Sigmoid colon (tissue), 7 donors: ENCODE measurements at regions of chr1 and their contacts with region 1.

Region 1: DNA sequence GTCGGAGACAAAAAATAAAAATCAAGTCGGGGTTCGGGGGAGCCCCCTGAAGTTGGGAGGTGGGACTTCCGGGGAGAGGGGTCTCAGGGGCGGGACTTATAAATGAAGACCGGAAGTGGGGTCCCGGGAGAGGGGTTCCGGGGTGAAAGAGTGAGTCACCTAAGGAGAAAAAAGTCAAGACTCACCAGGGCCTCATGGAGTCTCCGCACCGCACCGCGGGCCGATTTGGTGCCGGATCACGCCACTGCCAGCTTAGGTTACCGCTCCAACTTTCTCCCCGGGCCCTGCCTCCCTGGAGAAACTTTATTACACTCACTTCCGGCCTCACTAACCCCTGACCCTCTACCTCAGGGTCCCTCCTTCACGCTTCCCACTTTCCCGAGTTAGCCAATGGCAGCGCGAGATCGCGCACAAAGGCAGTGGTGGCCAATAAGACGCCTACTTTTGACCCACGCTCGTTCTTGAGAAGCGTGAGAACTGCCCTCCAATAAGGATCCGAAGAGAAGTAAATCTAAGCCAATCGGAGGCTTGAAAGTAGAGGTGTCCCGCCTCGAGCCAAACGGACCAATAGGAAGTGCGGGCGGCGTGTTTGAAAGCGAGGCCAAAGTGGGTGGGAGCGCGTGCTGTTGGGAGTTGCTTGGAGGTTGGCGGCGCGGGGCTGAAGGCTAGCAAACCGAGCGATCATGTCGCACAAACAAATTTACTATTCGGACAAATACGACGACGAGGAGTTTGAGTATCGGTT is at the start of gene CKS1B:
- DNase-seq: peak; percentile 99
- H3K4me3 ChIP-seq: peak within 1 kb of the TSS; percentile 60 to 77 (median 70)
- H3K27ac ChIP-seq: peak within 1 kb of the TSS; percentile 95 to 98 (median 96)
- H3K4me1 ChIP-seq: peaks cover 0 to 51% (median 46%) of the 10 kb centered on the region in 4 donors
- H3K27me3 ChIP-seq: no peaks in the 10 kb centered on the region
- CTCF ChIP-seq: no peak
- EP300 ChIP-seq: no peak
- POLR2A ChIP-seq: peak; percentile 57 to 59
- total RNA-seq, gene CKS1B: 10.2 to 35.7 (median 25.7) TPM

Region 2: GRCh38 chr1:154936555-154937084 is 37.6 kb before region 1 on chr1 and contains the start of gene PMVK:
- intact Hi-C with region 1: loop called (anchors 1 kb)
- DNase-seq: peak; percentile 99
- H3K4me3 ChIP-seq: peak within 1 kb of the TSS; percentile 66 to 80 (median 70)
- H3K27ac ChIP-seq: peak within 1 kb of the TSS; percentile 90 to 98 (median 96)
- H3K4me1 ChIP-seq: peaks cover 0 to 38% (median 28%) of the 10 kb centered on the region in 4 donors
- H3K27me3 ChIP-seq: no peaks in the 10 kb centered on the region
- CTCF ChIP-seq: peak in 3 of 4 experiments; percentile 16 to 29 (median 28)
- EP300 ChIP-seq: no peak
- POLR2A ChIP-seq: peak; percentile 51 to 54
- total RNA-seq, gene PMVK: 11.1 to 19.6 (median 13.7) TPM

Region 3: GRCh38 chr1:155001675-155002463 is 27.6 kb after region 1 on chr1:
- intact Hi-C with region 1: loop called (anchors 1 kb)
- DNase-seq: peak; percentile 100
- H3K4me3 ChIP-seq: peak overlapping the region; percentile 73 to 94 (median 81)
- H3K27ac ChIP-seq: peak overlapping the region; percentile 96 to 99 (median 98)
- H3K4me1 ChIP-seq: peaks cover 0 to 50% (median 47%) of the 10 kb centered on the region in 4 donors
- H3K27me3 ChIP-seq: no peaks in the 10 kb centered on the region
- CTCF ChIP-seq: peak in 2 of 4 experiments; percentile 6 to 22
- EP300 ChIP-seq: no peak
- POLR2A ChIP-seq: peak; percentile 91 to 95

Region 4: GRCh38 chr1:155017041-155017945 is 43.1 kb after region 1 on chr1:
- intact Hi-C with region 1: loop called (anchors 1 kb)
- DNase-seq: peak; percentile 97
- H3K4me3 ChIP-seq: peak overlapping the region; percentile 40 to 58 (median 53)
- H3K27ac ChIP-seq: peak overlapping the region; percentile 88 to 92 (median 90)
- H3K4me1 ChIP-seq: peaks cover 0 to 35% (median 26%) of the 10 kb centered on the region in 4 donors
- H3K27me3 ChIP-seq: no peaks in the 10 kb centered on the region
- CTCF ChIP-seq: peak; percentile 99 to 100 (median 100)
- EP300 ChIP-seq: peak in 1 of 4 donors; percentile 74
- POLR2A ChIP-seq: peak in 1 of 2 donors; percentile 39

Region 5: GRCh38 chr1:155063550-155064110 is 89.4 kb after region 1 on chr1 and contains the start of gene EFNA4:
- intact Hi-C with region 1: loop called (anchors 5 kb)
- DNase-seq: peak; percentile 94
- H3K4me3 ChIP-seq: peak within 1 kb of the TSS; percentile 70 to 90 (median 86)
- H3K27ac ChIP-seq: peak within 1 kb of the TSS; percentile 75 to 84 (median 80)
- H3K4me1 ChIP-seq: peaks cover 3 to 34% (median 30%) of the 10 kb centered on the region in 4 donors
- H3K27me3 ChIP-seq: peaks cover 0 to 7% (median 0%) of the 10 kb centered on the region in 3 donors
- CTCF ChIP-seq: no peak
- EP300 ChIP-seq: no peak
- POLR2A ChIP-seq: peak in 1 of 2 donors; percentile 42
- total RNA-seq, gene EFNA4: 1.6 to 5.0 (median 3.1) TPM